Gastrocnemius medialis (tissue), 4 donors: ENCODE measurements at regions of chr19 and their contacts with region 1.

Region 1: GRCh38 chr19:44839276-44839675 is 6.8 kb upstream of the NECTIN2 start:
- DNase-seq: no peak
- ATAC-seq: no peak
- H3K4me3 ChIP-seq: no peak overlapping the region
- H3K27ac ChIP-seq: no peak overlapping the region
- H3K4me1 ChIP-seq: peaks cover 0 to under 1% of the 10 kb centered on the region in 2 donors
- H3K27me3 ChIP-seq: no peaks in the 10 kb centered on the region
- CTCF ChIP-seq: no peak
- POLR2A ChIP-seq: no peak

Region 2: GRCh38 chr19:44643605-44644401 is 195.5 kb before region 1 on chr19 and contains the start of gene PVR:
- in situ Hi-C with region 1: no loop called
- intact Hi-C with region 1: no loop called
- DNase-seq: peak; percentile 45 to 72
- ATAC-seq: peak; percentile 72 to 76
- H3K4me3 ChIP-seq: peak within 1 kb of the TSS; percentile 75 to 98 (median 92)
- H3K27ac ChIP-seq: peak within 1 kb of the TSS; percentile 88 to 97 (median 95)
- H3K4me1 ChIP-seq: peaks cover 41 to 42% of the 10 kb centered on the region in 2 donors
- H3K27me3 ChIP-seq: no peaks in the 10 kb centered on the region
- CTCF ChIP-seq: peak in 1 of 5 experiments; percentile 13
- POLR2A ChIP-seq: peak; percentile 84 to 86
- total RNA-seq, gene PVR: 27.3 to 60.2 (median 33.9) TPM

Region 3: DNA sequence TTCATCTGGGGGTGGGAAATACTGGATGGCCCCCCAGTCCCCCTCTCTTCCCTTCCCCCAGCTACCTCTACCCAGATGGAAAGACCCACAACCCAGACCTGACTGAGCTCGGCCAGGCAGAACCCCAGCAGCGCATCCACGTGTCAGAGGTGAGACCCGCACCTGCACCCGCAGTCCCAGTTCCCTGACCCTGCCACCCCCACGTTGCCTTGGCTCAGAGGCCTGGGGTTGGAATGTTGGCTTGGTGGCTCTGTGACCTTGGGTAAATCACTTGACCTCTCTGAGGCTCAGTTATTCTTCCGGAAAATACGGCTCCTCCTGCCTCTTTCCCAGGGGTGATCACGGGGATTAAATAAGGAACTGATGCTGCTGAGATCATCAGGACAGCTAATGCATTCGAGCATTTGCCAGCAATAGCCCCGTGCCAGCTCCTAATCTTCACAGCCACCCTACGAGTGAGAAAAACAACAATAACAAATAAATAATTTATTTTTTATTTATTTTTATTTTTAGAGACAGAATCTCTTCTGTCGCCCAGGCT is 49.3 kb before region 1 on chr19:
- in situ Hi-C with region 1: loop called (anchors 5 to 10 kb)
- intact Hi-C with region 1: no loop called
- DNase-seq: no peak
- ATAC-seq: no peak
- H3K4me3 ChIP-seq: no peak overlapping the region
- H3K27ac ChIP-seq: no peak overlapping the region
- H3K4me1 ChIP-seq: no peaks in the 10 kb centered on the region
- H3K27me3 ChIP-seq: no peaks in the 10 kb centered on the region
- CTCF ChIP-seq: no peak
- POLR2A ChIP-seq: no peak

Region 4: GRCh38 chr19:44820648-44821609 is 18.3 kb before region 1 on chr19:
- in situ Hi-C with region 1: no loop called
- intact Hi-C with region 1: no loop called
- DNase-seq: peak in 1 of 2 donors; percentile 25
- ATAC-seq: peak; percentile 44 to 49
- H3K4me3 ChIP-seq: peak overlapping the region in 1 of 4 donors; percentile 15
- H3K27ac ChIP-seq: peak overlapping the region; percentile 43 to 77 (median 72)
- H3K4me1 ChIP-seq: peaks cover 0 to 8% of the 10 kb centered on the region in 2 donors
- H3K27me3 ChIP-seq: no peaks in the 10 kb centered on the region
- CTCF ChIP-seq: no peak
- POLR2A ChIP-seq: no peak